Prostate gland (tissue), 2 donors: ENCODE measurements at regions of chr14 and their contacts with region 1.

Region 1: DNA sequence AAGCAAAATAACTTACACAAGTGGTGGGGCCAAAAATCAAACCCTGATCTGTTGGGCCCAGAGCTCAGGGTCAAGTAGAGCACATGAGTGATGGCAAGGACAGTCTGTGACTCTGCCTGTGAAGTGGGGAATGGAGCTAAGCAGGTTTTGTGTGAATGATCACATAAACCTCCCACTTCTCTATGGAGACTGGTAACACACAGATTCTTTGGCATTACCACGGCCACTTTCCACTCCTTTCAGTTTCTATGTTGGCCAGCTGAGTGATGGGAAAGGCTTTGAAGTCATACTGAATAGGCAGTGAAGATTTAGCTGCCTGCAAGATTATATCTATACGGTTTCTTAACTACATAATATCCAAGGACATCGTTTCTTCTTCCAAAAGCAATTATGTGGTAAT is 97.9 kb downstream of the ARMH4 start:
- DNase-seq: no peak
- H3K4me3 ChIP-seq: no peak overlapping the region
- H3K27ac ChIP-seq: no peak overlapping the region
- H3K4me1 ChIP-seq: no peaks in the 10 kb centered on the region
- H3K27me3 ChIP-seq: no peaks in the 10 kb centered on the region
- CTCF ChIP-seq: no peak
- POLR2A ChIP-seq: no peak

Region 2: DNA sequence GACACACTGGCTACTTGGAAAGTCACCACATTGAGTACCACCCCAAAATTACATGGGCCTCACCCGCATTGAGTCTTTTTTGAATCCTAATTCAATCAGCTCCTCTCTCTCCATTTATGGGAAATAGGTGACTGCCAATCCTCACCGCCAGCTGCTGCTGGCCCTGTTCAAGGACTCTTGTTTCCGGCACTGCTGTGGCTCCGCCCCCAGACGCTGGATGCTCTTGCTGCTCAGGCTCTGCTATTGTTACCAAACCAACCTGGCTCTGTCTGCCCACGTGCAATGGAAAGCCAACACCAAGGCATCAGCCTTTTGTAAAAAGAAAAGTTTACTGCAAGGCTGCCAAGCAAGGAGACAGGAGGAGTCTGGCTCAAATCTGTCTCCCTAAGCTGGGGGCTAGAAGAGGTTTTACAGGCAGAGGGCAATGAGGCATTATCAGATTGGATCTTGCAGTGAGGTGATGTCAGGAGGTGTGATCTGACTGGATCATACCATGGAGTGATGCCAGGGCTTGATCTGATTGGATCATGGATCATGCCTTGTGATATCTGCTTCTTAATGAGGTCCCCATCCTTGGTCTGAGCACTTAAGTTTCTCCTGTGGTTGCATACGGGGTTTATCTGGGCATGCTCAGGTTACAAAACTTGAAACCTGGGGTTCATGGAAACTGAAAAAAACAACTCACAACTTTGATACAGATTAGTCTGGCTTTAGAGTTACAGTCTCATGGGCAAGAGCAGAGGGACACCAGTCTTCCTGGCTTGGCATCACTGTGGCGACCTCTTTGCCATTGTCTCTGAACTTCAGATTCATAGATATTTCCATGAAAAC is 71.1 kb before region 1 on chr14:
- intact Hi-C with region 1: no loop called
- DNase-seq: no peak
- H3K4me3 ChIP-seq: no peak overlapping the region
- H3K27ac ChIP-seq: no peak overlapping the region
- H3K4me1 ChIP-seq: no peaks in the 10 kb centered on the region
- H3K27me3 ChIP-seq: no peaks in the 10 kb centered on the region
- CTCF ChIP-seq: no peak
- POLR2A ChIP-seq: no peak

Region 3: DNA sequence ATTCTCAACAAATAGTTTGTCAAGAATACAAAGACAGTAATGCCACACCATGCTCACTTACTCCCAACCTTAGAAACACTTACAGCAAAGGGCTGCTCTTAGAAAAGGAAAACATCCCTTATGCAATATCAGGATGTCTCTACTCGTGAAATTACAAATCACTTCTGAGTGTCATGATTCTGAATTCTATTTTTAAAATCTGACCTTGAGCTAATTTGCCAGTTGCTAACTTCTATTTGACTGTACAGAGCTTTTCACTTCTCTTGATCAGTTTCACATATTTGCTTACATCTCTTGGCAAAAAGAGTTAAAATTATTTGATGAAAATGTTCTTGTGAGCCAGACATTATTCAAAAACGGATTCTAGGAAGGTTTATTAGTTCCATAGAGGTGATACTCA is 51.5 kb before region 1 on chr14:
- intact Hi-C with region 1: loop called (anchors 5 kb)
- DNase-seq: no peak
- H3K4me3 ChIP-seq: no peak overlapping the region
- H3K27ac ChIP-seq: no peak overlapping the region
- H3K4me1 ChIP-seq: no peaks in the 10 kb centered on the region
- H3K27me3 ChIP-seq: no peaks in the 10 kb centered on the region
- CTCF ChIP-seq: no peak
- POLR2A ChIP-seq: no peak

Region 4: DNA sequence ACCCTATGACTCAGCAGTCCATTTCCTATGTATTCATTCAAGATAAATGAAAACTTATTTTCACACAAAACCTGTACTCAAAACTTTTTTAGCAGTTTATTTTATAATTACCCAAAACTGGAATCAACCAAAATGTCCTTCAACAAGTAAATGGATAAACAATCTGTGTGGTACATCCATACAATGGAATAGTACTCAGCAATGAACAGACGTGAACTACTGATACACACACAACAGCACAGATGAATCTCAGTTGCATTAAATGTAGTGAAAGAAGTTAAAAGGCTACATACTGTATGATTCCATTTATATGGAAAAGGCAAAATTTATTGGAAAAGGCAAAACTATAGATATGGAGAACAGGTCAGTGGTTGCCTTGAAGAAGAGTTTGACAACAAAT is 463.5 kb after region 1 on chr14:
- intact Hi-C with region 1: no loop called
- DNase-seq: no peak
- H3K4me3 ChIP-seq: no peak overlapping the region
- H3K27ac ChIP-seq: no peak overlapping the region
- H3K4me1 ChIP-seq: no peaks in the 10 kb centered on the region
- H3K27me3 ChIP-seq: no peaks in the 10 kb centered on the region
- CTCF ChIP-seq: no peak
- POLR2A ChIP-seq: no peak